Activated naive CD4-positive, alpha-beta T cell treated with anti-CD3 and anti-CD28 coated beads for 36 hours (primary cell): ENCODE measurements at regions of chrX and their contacts with region 1.

Region 1: DNA sequence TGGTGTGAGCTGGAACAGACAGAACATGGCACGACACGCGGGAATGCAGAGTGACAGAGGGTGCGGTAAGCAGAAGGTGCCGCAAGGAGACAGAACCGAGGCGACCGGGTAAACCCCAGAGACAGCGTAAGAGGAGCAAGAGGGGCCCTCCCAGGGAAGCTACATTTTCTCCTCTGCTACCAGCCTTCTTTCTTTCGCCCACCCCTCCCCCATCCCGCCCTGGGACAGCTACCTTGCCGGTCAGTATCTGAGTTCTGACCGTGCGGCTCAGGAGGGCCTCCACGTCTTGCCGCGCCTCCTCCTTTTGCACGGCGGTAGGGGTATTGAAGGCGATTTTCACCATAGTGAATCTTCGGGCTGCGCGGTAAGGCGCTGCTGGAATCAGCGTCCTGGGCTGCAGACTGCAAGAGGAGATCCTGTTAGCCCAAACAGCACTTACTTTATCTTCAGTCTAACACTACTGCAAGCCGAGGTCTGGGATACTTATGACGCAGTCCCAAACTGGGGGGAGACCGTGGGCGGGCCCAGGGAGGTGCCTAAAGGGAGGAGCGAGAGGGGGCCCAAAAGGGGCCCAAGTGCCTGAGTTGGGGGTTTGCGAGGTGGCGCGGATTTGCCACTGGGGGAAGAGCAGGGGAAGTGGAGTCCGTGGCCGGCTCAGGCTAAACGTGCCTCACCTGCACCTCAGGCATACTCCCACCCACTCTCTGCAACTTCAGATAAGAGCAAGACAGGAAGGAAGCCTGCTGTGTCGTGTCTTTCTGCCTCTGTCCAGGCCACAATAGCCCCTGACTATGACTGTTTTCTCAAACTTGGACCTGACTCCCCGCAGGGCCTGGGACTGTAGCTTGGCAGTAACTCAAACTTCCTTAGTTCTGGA is at the start of gene ITM2A:
- DNase-seq: peak; percentile 76
- H3K4me3 Mint-ChIP-seq: peak within 1 kb of the TSS; percentile 86
- H3K27ac Mint-ChIP-seq: peak within 1 kb of the TSS; percentile 93
- H3K4me1 Mint-ChIP-seq: peaks cover 39% of the 10 kb centered on the region
- H3K27me3 Mint-ChIP-seq: no peaks in the 10 kb centered on the region
- total RNA-seq, gene ITM2A: 99.5 to 116 TPM

Region 2: GRCh38 chrX:78321809-78322208 is 1045.3 kb before region 1 on chrX:
- CTCF ChIA-PET with region 1: no interaction called
- intact Hi-C with region 1: loop called (anchors 2 kb)
- DNase-seq: peak; percentile 63
- H3K4me3 Mint-ChIP-seq: peak overlapping the region; percentile 32
- H3K27ac Mint-ChIP-seq: peak overlapping the region; percentile 85
- H3K4me1 Mint-ChIP-seq: peaks cover 36% of the 10 kb centered on the region
- H3K27me3 Mint-ChIP-seq: no peaks in the 10 kb centered on the region

Region 3: GRCh38 chrX:79153348-79153747 is 213.8 kb before region 1 on chrX:
- CTCF ChIA-PET with region 1: no interaction called
- intact Hi-C with region 1: loop called (anchors 2 kb)
- DNase-seq: no peak
- H3K4me3 Mint-ChIP-seq: peak overlapping the region; percentile 72
- H3K27ac Mint-ChIP-seq: peak overlapping the region; percentile 96
- H3K4me1 Mint-ChIP-seq: peaks cover 53% of the 10 kb centered on the region
- H3K27me3 Mint-ChIP-seq: no peaks in the 10 kb centered on the region

Region 4: DNA sequence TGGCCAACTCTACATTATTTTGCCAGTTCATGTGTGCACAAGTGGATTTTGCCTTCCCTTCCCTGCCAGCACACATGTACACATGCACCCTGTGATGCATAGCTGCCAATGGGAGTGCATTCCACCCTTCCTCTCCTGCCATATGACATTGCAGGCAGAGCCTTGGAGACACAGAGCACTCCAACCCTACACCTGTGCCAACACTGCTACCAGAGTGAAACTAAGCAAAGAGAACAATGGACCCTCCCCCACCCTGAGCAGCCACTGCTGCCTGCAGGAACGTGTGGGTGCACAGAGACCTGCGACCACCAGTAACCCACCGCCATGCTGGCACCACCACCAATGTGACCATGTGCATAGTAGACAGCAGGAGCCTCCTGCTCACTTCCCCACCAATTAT is 78.4 kb before region 1 on chrX:
- CTCF ChIA-PET with region 1: no interaction called
- intact Hi-C with region 1: loop called (anchors 5 kb)
- DNase-seq: no peak
- H3K4me3 Mint-ChIP-seq: no peak overlapping the region
- H3K27ac Mint-ChIP-seq: no peak overlapping the region
- H3K4me1 Mint-ChIP-seq: peaks cover 49% of the 10 kb centered on the region
- H3K27me3 Mint-ChIP-seq: no peaks in the 10 kb centered on the region

Region 5: DNA sequence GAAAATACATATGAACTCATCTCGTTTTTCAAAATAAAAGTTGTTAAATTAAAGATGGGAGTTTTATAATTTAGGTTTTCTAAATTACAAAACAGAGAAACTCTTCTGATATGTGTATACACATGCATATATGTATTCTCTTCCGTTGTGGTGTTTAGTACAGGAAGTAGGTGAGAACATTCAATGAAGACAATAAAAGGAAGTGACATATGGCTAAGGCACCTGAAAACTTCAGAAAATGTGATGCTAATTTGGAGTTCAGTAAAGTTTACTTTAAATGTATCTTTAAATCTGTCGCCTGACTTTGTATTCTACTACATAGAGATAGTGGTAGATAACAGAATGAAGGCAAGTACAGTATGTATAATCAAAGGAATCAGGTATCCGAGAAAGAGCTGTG is 33.5 kb after region 1 on chrX:
- CTCF ChIA-PET with region 1: no interaction called
- intact Hi-C with region 1: loop called (anchors 2 kb)
- DNase-seq: no peak
- H3K4me3 Mint-ChIP-seq: no peak overlapping the region
- H3K27ac Mint-ChIP-seq: no peak overlapping the region
- H3K4me1 Mint-ChIP-seq: peaks cover 19% of the 10 kb centered on the region
- H3K27me3 Mint-ChIP-seq: no peaks in the 10 kb centered on the region